CD4-positive, alpha-beta T cell (primary cell): ENCODE measurements at regions of chr17 and their contacts with region 1.

Region 1: DNA sequence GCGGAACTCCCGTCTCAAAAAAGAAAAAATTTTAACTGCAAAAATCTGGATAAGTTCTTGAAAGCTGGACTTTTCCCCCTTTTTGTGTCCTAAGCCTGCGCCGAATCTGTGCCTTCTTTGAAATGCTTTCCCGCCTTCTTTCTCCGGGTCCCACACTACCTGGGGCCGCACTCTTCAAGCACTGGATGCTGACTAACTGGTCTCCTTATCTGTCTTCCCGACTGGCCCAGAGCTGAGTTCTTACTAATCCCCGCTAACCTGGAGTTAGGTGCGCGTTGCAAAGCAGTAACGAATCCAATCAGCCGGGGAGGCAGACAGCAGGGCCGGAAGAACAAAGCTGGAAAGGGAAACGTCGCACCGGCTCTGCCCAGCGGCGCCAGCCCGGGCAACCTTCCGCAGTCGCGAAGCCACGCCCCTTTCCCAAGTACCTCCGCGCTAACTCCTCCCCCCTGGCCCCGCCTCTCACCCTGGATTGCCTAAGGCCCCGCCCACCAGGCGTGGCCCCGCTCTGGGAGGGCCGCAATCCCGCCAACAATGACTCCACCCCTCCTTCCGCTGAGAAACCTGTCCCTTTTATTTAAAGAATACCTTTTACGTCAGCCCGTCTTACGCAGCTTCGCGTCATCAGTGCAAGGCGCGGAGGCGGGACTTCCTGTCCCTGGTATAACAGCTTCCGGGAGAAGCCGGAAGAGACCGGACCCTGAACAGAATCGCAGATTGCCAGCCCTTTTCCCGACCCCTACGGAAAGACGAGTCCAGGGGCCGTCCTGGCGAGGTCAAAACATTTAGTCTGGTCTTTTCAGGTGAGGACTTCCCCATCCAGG is at the start of gene TMUB2:
- DNase-seq: peak; percentile 99 to 100 (median 99)
- ATAC-seq: peak; percentile 92
- H3K4me3 ChIP-seq: peak within 1 kb of the TSS; percentile 90
- H3K4me3 Mint-ChIP-seq: peak within 1 kb of the TSS; percentile 98
- H3K27ac ChIP-seq: peak within 1 kb of the TSS; percentile 97 to 99
- H3K27ac Mint-ChIP-seq: peak within 1 kb of the TSS; percentile 96
- H3K4me1 ChIP-seq: peaks cover 64% of the 10 kb centered on the region
- H3K4me1 Mint-ChIP-seq: peaks cover 54% of the 10 kb centered on the region
- H3K27me3 ChIP-seq: no peaks in the 10 kb centered on the region
- H3K27me3 Mint-ChIP-seq: no peaks in the 10 kb centered on the region
- CTCF ChIP-seq: no peak
- total RNA-seq, gene TMUB2: 33.3 to 34.8 TPM

Region 2: DNA sequence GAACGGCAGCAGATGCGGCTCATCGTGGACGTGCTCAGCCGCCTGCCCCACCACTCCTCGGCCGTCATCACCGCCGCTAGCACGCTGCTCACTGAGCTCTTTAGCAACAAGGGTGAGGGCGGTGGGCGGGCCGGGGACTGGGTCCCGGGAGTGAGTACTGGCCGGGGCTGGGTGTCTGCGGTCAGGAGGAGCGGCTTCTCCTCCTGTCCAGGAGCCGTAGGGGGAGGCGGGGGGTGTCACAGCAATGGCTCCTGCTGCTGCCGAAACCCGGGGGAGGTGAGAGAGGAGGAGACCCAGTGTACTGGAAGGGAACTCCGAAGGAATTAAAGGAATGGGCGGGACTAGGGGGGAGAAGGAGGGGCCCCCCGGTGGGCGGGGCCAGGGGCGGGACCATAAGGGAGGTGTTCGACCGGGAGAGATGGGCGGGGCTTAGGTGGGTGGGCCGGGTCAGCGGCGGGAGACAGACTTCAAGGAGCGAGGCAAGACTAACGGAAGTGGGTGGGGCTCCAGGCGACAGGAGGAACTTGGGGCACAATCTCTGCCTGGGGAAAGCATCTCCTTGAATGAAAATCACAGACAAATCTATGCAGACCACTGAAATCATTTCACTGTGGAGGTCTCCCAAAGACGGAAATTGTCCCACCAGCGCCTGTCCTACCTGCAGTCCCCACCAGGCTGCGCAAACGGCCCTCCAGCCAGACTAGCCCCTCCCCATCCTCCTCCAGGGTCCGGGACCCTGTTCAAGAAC is 179.7 kb before region 1 on chr17:
- CTCF ChIA-PET with region 1: no interaction called
- POLR2A ChIA-PET with region 1: interaction called, 3 read pairs
- intact Hi-C with region 1: loop called in 1 of 2 experiments (anchors 5 kb)
- DNase-seq: peak; percentile 90 to 100 (median 98)
- ATAC-seq: peak; percentile 80
- H3K4me3 ChIP-seq: peak overlapping the region; percentile 91
- H3K4me3 Mint-ChIP-seq: peak overlapping the region; percentile 91
- H3K27ac ChIP-seq: no peak overlapping the region
- H3K27ac Mint-ChIP-seq: no peak overlapping the region
- H3K4me1 ChIP-seq: peaks cover 52% of the 10 kb centered on the region
- H3K4me1 Mint-ChIP-seq: peaks cover 22% of the 10 kb centered on the region
- H3K27me3 ChIP-seq: peaks cover 0 to 8% of the 10 kb centered on the region in 2 experiments
- H3K27me3 Mint-ChIP-seq: peaks cover 33% of the 10 kb centered on the region
- CTCF ChIP-seq: no peak

Region 3: DNA sequence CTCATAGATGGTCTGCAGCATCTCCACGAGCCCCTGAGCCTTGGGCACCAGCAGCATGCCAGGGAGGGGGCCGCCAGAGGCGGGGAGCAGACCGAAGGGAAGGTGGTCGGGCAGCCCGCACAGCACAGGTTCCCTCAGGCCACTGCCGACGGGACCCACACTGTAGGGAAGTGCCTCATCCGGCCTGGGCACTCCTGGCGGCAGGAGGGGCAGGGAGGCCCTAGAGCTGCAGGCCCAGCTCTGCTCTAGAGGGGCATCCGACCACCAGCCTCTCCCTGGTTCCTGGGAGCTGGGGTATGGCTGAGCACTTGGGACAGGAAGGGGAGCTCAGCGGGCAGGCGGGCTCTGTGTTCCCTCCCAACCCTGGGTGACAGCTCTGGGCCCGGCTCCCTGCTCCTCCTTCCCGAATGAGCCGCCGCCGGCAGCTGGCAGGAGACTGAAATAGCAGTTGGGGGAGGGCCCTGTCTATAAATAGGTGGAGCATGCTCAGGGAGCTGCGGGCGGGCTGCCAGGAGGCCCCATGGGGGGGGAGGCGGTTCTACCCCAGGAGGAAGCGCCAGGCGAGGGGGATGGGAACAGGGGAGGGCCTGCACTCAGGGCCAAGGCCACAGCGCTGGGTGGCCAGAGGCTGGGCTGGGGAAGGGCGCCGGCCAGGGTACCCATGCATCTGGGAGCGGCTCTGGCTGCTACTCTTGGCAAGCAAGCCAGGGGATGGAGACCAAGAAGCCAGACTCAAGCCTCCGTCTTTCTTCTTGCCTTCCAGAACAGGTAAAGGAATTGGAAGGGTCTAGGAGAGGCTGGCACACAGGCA is 75.5 kb before region 1 on chr17:
- CTCF ChIA-PET with region 1: no interaction called
- POLR2A ChIA-PET with region 1: no interaction called
- intact Hi-C with region 1: no loop called
- DNase-seq: peak; percentile 35 to 77 (median 60)
- ATAC-seq: peak; percentile 70
- H3K4me3 ChIP-seq: peak overlapping the region; percentile 7
- H3K4me3 Mint-ChIP-seq: no peak overlapping the region
- H3K27ac ChIP-seq: no peak overlapping the region
- H3K27ac Mint-ChIP-seq: no peak overlapping the region
- H3K4me1 ChIP-seq: peaks cover 28% of the 10 kb centered on the region
- H3K4me1 Mint-ChIP-seq: peaks cover 31% of the 10 kb centered on the region
- H3K27me3 ChIP-seq: no peaks in the 10 kb centered on the region
- H3K27me3 Mint-ChIP-seq: no peaks in the 10 kb centered on the region
- CTCF ChIP-seq: no peak

Region 4: DNA sequence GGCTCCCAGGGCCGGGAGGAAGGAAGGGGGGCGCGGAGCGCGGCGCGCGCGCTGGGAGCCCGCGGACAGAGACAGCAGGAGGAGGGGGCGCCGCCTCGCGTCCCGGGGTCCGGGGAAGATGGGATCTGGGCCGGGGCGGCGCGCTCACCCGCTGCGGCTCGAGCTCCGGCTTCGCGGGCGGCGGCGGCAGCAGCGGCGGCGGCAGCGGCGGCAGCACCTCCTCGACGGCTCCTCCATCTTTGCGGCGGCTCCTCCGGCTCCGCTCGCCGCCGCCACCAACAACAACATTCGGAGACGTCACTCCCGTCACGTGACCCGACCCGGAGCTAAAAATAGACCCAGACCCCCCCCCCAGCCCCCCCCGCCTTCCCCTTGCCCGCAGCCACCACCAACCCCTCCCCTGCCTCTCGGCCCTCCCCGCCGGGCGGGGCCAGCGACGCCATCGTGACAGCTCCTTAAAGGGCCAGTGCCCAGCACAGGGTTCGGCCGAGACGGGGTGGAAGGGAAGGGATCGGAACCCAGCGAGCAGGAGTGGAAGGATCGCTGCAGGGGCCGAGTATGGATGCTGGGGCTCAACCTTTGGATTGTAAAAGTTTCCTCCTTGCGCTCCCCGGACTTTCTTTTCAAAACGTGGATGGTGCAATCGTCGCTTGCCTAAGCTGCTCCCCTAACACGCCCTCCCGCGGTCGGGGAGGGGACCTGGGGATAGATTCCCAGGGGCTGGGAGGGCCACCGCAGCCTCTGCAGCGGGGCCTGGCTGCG is 63.0 kb before region 1 on chr17 and contains the start of gene HDAC5:
- CTCF ChIA-PET with region 1: no interaction called
- POLR2A ChIA-PET with region 1: interaction called, 21 read pairs
- intact Hi-C with region 1: loop called (anchors 5 kb)
- DNase-seq: peak; percentile 93 to 99 (median 96)
- ATAC-seq: peak; percentile 94
- H3K4me3 ChIP-seq: peak within 1 kb of the TSS; percentile 73
- H3K4me3 Mint-ChIP-seq: peak within 1 kb of the TSS; percentile 99
- H3K27ac ChIP-seq: peak within 1 kb of the TSS; percentile 57 to 83
- H3K27ac Mint-ChIP-seq: peak within 1 kb of the TSS; percentile 99
- H3K4me1 ChIP-seq: peaks cover 52% of the 10 kb centered on the region
- H3K4me1 Mint-ChIP-seq: peaks cover 47% of the 10 kb centered on the region
- H3K27me3 ChIP-seq: no peaks in the 10 kb centered on the region
- H3K27me3 Mint-ChIP-seq: no peaks in the 10 kb centered on the region
- CTCF ChIP-seq: peak; percentile 66
- total RNA-seq, gene HDAC5: 92.0 to 92.5 TPM

Region 5: DNA sequence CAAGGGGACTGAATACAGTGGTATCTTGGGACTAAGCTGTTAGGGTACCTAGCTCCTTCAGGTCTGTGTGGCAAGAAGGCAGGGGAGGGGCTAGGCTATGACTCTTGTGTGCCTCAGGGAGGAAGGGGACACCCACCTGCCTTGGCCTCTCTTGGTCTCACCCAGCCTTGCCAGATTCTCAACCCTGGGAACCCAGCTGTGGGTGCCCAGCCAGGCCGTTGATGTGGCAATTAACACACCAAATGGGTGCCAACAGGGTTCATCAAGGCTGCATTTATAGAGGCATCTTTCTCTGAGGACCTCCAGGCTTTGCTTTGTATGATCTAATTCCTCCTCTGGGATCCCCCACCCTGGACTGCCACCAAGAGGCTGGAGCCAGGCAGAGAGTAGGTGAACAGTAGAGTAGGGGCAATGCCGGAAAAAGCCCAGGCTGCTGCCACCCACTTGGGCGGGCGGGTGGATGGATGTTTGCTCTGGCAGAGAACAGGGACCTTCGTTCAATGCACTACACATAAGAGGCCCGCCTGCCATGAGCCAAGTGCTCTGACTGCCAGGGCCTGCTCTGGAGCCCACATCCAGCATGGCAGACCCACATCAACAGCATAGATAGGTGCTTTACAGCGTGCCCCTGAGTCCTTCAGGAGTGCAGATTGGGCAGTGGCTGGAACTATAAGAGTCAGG is 19.2 kb before region 1 on chr17:
- CTCF ChIA-PET with region 1: interaction called, 6 read pairs
- POLR2A ChIA-PET with region 1: interaction called, 17 read pairs
- intact Hi-C with region 1: no loop called
- DNase-seq: no peak
- ATAC-seq: no peak
- H3K4me3 ChIP-seq: no peak overlapping the region
- H3K4me3 Mint-ChIP-seq: no peak overlapping the region
- H3K27ac ChIP-seq: no peak overlapping the region
- H3K27ac Mint-ChIP-seq: no peak overlapping the region
- H3K4me1 ChIP-seq: peaks cover 7% of the 10 kb centered on the region
- H3K4me1 Mint-ChIP-seq: peaks cover 10% of the 10 kb centered on the region
- H3K27me3 ChIP-seq: no peaks in the 10 kb centered on the region
- H3K27me3 Mint-ChIP-seq: no peaks in the 10 kb centered on the region
- CTCF ChIP-seq: no peak

Region 6: GRCh38 chr17:44210342-44211192 is 24.0 kb after region 1 on chr17:
- CTCF ChIA-PET with region 1: interaction called, 37 read pairs
- POLR2A ChIA-PET with region 1: interaction called, 26 read pairs
- intact Hi-C with region 1: no loop called
- DNase-seq: peak; percentile 83 to 96 (median 90)
- ATAC-seq: peak; percentile 97
- H3K4me3 ChIP-seq: no peak overlapping the region
- H3K4me3 Mint-ChIP-seq: peak overlapping the region; percentile 65
- H3K27ac ChIP-seq: peak overlapping the region; percentile 32 to 53
- H3K27ac Mint-ChIP-seq: peak overlapping the region; percentile 59
- H3K4me1 ChIP-seq: peaks cover 73% of the 10 kb centered on the region
- H3K4me1 Mint-ChIP-seq: peaks cover 41% of the 10 kb centered on the region
- H3K27me3 ChIP-seq: no peaks in the 10 kb centered on the region
- H3K27me3 Mint-ChIP-seq: no peaks in the 10 kb centered on the region
- CTCF ChIP-seq: peak; percentile 98